ENCODE measurements at regions of chr1 and their contacts with region 1.

Region 1: GRCh38 chr1:218717575-218717974 is 372.4 kb downstream of the TGFB2 start:
- DNase-seq: no peak
- H3K4me3 ChIP-seq: no peak overlapping the region
- H3K27ac ChIP-seq: no peak overlapping the region
- H3K4me1 ChIP-seq: no peaks in the 10 kb centered on the region
- H3K27me3 ChIP-seq: no peaks in the 10 kb centered on the region
- CTCF ChIP-seq: no peak

Region 2: GRCh38 chr1:218642033-218642998 is 75.3 kb before region 1 on chr1:
- CTCF ChIA-PET with region 1: no interaction called
- POLR2A ChIA-PET with region 1: no interaction called
- intact Hi-C with region 1: no loop called
- DNase-seq: no peak
- H3K4me3 ChIP-seq: no peak overlapping the region
- H3K27ac ChIP-seq: no peak overlapping the region
- H3K4me1 ChIP-seq: no peaks in the 10 kb centered on the region
- H3K27me3 ChIP-seq: no peaks in the 10 kb centered on the region
- CTCF ChIP-seq: no peak

Region 3: GRCh38 chr1:218742467-218743260 is 25.1 kb after region 1 on chr1:
- CTCF ChIA-PET with region 1: no interaction called
- POLR2A ChIA-PET with region 1: no interaction called
- intact Hi-C with region 1: loop called (anchors 2 kb)
- DNase-seq: no peak
- H3K4me3 ChIP-seq: no peak overlapping the region
- H3K27ac ChIP-seq: no peak overlapping the region
- H3K4me1 ChIP-seq: no peaks in the 10 kb centered on the region
- H3K27me3 ChIP-seq: no peaks in the 10 kb centered on the region
- CTCF ChIP-seq: no peak

Region 4: DNA sequence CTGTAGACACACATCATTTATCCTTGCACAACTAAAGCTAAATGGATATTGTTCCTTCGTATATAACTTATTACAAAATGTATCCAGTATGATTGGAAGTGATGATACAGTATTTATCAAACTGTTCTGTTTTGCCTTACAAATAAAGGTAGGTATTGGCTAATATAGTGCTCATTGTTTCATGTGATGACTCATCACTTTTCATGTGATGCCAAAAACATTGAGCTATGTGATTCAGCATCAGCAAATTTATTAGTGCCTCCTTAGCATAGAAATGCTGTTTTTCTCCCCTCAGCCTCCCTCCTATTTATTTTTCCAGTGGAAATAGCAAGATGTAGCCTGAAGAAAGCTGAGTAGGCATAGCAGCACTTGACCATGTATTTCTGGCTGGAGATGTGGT is 227.5 kb after region 1 on chr1:
- CTCF ChIA-PET with region 1: no interaction called
- POLR2A ChIA-PET with region 1: no interaction called
- intact Hi-C with region 1: no loop called
- DNase-seq: no peak
- H3K4me3 ChIP-seq: no peak overlapping the region
- H3K27ac ChIP-seq: no peak overlapping the region
- H3K4me1 ChIP-seq: 0 out of 2 replicates have a peak, but pooled peaks cover 8% of the 10 kb centered on the region
- H3K27me3 ChIP-seq: no peaks in the 10 kb centered on the region
- CTCF ChIP-seq: no peak

Measured in PC-9 (cell line).